Sciatic nerve (tissue), 2 donors: ENCODE measurements at regions of chr2 and their contacts with region 1.

Region 1: GRCh38 chr2:237682856-237683670 is 55.7 kb downstream of the LRRFIP1 start:
- DNase-seq: no peak
- ATAC-seq: no peak

Region 2: GRCh38 chr2:237540823-237541222 is 142.2 kb before region 1 on chr2:
- intact Hi-C with region 1: no loop called
- DNase-seq: peak; percentile 84
- ATAC-seq: peak; percentile 91

Region 3: GRCh38 chr2:237723602-237724001 is 40.5 kb after region 1 on chr2:
- intact Hi-C with region 1: loop called (anchors 1 kb)
- DNase-seq: no peak
- ATAC-seq: peak; percentile 46